CD4-positive, alpha-beta T cell (primary cell): ENCODE measurements at regions of chr9 and their contacts with region 1.

Region 1: GRCh38 chr9:36190388-36191287 is at the start of gene CLTA:
- DNase-seq: peak; percentile 85 to 98 (median 88)
- ATAC-seq: peak; percentile 98
- H3K4me3 ChIP-seq: peak within 1 kb of the TSS; percentile 62
- H3K4me3 Mint-ChIP-seq: peak within 1 kb of the TSS; percentile 93
- H3K27ac ChIP-seq: peak within 1 kb of the TSS; percentile 74 to 92
- H3K27ac Mint-ChIP-seq: peak within 1 kb of the TSS; percentile 81
- H3K4me1 ChIP-seq: peaks cover 44% of the 10 kb centered on the region
- H3K4me1 Mint-ChIP-seq: peaks cover 48% of the 10 kb centered on the region
- H3K27me3 ChIP-seq: no peaks in the 10 kb centered on the region
- H3K27me3 Mint-ChIP-seq: no peaks in the 10 kb centered on the region
- CTCF ChIP-seq: peak; percentile 74
- total RNA-seq, gene CLTA: 32.0 to 32.8 TPM

Region 2: DNA sequence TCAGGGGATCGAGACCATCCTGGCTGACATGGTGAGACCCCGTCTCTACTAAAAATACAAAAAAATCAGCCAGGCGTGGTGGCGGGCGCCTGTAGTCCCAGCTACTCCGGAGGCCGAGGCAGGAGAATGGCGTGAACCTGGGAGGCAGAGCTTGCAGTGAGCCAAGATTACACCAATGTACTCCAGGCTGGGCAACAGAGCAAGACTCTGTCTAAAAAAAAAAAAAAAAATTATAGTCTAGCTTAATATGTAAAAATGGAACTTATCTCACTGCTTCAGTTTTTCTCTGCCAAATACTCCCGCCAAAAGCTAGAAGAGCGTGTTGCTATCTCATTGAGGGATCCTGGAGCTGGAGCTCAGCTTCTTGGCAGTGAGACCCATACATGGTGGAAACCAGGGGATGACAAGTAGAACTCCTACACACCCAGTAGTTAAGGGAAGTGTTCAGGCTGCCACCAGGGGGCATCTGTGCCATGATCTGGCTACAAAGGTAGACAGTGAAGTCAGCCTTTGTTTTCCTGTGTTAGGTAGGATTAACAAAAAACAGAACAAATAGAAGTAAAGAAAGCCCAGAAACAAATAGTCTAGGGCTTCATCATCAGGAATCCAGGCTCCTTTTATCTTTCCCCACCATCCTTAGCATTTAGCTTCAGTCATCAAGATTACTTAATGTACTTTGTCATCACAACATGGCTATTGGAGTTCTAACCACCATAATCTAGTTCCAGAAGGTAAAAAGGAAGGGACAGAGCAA is 87.7 kb before region 1 on chr9:
- CTCF ChIA-PET with region 1: interaction called, 13 read pairs
- POLR2A ChIA-PET with region 1: interaction called, 9 read pairs
- intact Hi-C with region 1: no loop called
- DNase-seq: peak; percentile 79 to 95 (median 86)
- ATAC-seq: peak; percentile 100
- H3K4me3 ChIP-seq: no peak overlapping the region
- H3K4me3 Mint-ChIP-seq: no peak overlapping the region
- H3K27ac ChIP-seq: no peak overlapping the region
- H3K27ac Mint-ChIP-seq: no peak overlapping the region
- H3K4me1 ChIP-seq: peaks cover 8% of the 10 kb centered on the region
- H3K4me1 Mint-ChIP-seq: peaks cover 10% of the 10 kb centered on the region
- H3K27me3 ChIP-seq: no peaks in the 10 kb centered on the region
- H3K27me3 Mint-ChIP-seq: no peaks in the 10 kb centered on the region
- CTCF ChIP-seq: peak; percentile 80

Region 3: GRCh38 chr9:36148311-36149051 is 42.2 kb before region 1 on chr9:
- CTCF ChIA-PET with region 1: interaction called, 4 read pairs
- POLR2A ChIA-PET with region 1: interaction called, 16 read pairs
- intact Hi-C with region 1: no loop called
- DNase-seq: peak; percentile 36 to 88 (median 66)
- ATAC-seq: no peak
- H3K4me3 ChIP-seq: no peak overlapping the region
- H3K4me3 Mint-ChIP-seq: peak overlapping the region; percentile 31
- H3K27ac ChIP-seq: peak overlapping the region; percentile 52 to 58
- H3K27ac Mint-ChIP-seq: peak overlapping the region; percentile 98
- H3K4me1 ChIP-seq: peaks cover 99% of the 10 kb centered on the region
- H3K4me1 Mint-ChIP-seq: peaks cover 84% of the 10 kb centered on the region
- H3K27me3 ChIP-seq: no peaks in the 10 kb centered on the region
- H3K27me3 Mint-ChIP-seq: no peaks in the 10 kb centered on the region
- CTCF ChIP-seq: no peak

Region 4: GRCh38 chr9:36204906-36205547 is 14.4 kb after region 1 on chr9:
- CTCF ChIA-PET with region 1: interaction called, 4 read pairs
- POLR2A ChIA-PET with region 1: interaction called, 16 read pairs
- intact Hi-C with region 1: no loop called
- DNase-seq: no peak
- ATAC-seq: no peak
- H3K4me3 ChIP-seq: no peak overlapping the region
- H3K4me3 Mint-ChIP-seq: no peak overlapping the region
- H3K27ac ChIP-seq: no peak overlapping the region
- H3K27ac Mint-ChIP-seq: no peak overlapping the region
- H3K4me1 ChIP-seq: peaks cover 27% of the 10 kb centered on the region
- H3K4me1 Mint-ChIP-seq: peaks cover 44% of the 10 kb centered on the region
- H3K27me3 ChIP-seq: no peaks in the 10 kb centered on the region
- H3K27me3 Mint-ChIP-seq: no peaks in the 10 kb centered on the region
- CTCF ChIP-seq: no peak

Region 5: DNA sequence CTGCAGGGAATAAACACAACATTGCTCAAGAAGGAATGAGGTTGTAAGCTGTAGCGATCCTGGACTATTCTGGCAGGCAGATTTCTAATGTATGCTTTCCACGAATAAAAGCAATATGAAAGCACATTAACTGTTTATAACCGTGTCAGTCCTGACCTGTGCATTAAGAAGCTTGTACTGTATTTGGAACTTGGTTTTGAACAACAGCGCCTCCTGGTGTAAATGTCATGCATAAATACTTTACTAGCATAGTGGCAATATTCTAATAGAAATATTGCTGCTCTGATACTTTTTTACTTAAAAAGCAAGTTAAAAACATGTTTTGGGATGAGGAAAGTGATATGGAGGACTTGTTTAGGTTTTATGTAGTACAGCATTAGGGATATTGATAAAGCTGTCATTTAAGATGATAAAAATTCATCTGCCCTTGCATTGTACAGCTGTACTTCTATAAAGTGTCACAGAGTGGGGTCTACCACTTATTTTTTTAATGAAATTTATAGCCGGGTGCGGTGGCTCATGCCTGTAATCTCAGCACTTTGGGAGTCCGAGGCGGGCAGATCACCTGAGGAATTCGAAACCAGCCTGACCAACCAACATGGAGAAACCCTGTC is 138.3 kb after region 1 on chr9:
- CTCF ChIA-PET with region 1: interaction called, 5 read pairs
- POLR2A ChIA-PET with region 1: interaction called, 10 read pairs
- intact Hi-C with region 1: loop called (anchors 1 to 2 kb)
- DNase-seq: peak in 11 of 14 experiments; percentile 3 to 82 (median 22)
- ATAC-seq: peak; percentile 79
- H3K4me3 ChIP-seq: no peak overlapping the region
- H3K4me3 Mint-ChIP-seq: no peak overlapping the region
- H3K27ac ChIP-seq: no peak overlapping the region
- H3K27ac Mint-ChIP-seq: no peak overlapping the region
- H3K4me1 ChIP-seq: no peaks in the 10 kb centered on the region
- H3K4me1 Mint-ChIP-seq: peaks cover 5% of the 10 kb centered on the region
- H3K27me3 ChIP-seq: no peaks in the 10 kb centered on the region
- H3K27me3 Mint-ChIP-seq: no peaks in the 10 kb centered on the region
- CTCF ChIP-seq: peak; percentile 88

Region 6: DNA sequence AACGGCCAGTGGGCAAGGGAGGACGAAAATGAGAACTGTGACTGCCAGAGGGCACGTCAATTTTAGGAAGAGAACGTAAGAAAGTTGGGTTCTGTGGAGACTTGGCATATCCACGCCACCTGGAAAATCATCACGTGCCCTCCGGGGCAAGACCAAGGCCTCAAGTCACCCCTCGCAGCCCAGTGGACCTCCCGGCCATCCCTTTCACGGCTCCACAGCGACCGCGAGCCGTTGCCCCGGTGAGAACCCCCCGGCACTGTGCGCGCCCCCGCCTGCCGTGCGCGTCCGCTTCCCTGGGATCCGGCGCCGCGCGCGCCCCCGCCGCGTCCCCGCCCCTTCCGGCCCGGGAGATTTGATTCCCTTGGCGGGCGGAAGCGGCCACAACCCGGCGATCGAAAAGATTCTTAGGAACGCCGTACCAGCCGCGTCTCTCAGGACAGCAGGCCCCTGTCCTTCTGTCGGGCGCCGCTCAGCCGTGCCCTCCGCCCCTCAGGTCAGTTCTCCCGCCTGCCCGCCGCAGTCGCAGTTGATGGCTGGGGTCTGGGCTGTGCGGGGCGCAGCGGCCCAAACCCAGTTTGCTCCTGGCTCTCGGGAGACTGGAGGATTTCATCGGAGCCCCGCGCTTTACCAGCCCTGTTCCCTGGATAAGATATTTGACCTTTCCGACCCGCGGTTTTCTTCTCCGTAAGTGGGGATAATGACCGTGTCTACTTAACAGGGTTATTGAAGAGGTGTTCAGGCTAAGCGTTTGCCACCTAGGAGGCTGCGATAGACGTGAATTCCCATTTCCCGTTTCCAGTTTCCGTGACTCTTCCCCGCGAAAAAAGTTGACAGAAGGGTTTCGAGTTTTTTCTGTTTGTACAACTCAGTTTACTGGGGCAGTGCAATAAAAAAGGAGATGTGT is 382.1 kb after region 1 on chr9 and contains the start of gene MELK:
- CTCF ChIA-PET with region 1: no interaction called
- POLR2A ChIA-PET with region 1: no interaction called
- intact Hi-C with region 1: loop called in 1 of 2 experiments (anchors 5 kb)
- DNase-seq: peak; percentile 67 to 89 (median 80)
- ATAC-seq: peak; percentile 79
- H3K4me3 ChIP-seq: peak within 1 kb of the TSS; percentile 92
- H3K4me3 Mint-ChIP-seq: peak within 1 kb of the TSS; percentile 92
- H3K27ac ChIP-seq: peak within 1 kb of the TSS; percentile 46 to 69
- H3K27ac Mint-ChIP-seq: peak within 1 kb of the TSS; percentile 68
- H3K4me1 ChIP-seq: peaks cover 19% of the 10 kb centered on the region
- H3K4me1 Mint-ChIP-seq: peaks cover 25% of the 10 kb centered on the region
- H3K27me3 ChIP-seq: no peaks in the 10 kb centered on the region
- H3K27me3 Mint-ChIP-seq: no peaks in the 10 kb centered on the region
- CTCF ChIP-seq: no peak
- total RNA-seq, gene MELK: 0.42 to 0.47 TPM